ENCODE measurements at regions of chr10 and their contacts with region 1.

Region 1: GRCh38 chr10:29131952-29132820 is 156.7 kb upstream of the LYZL1 start:
- DNase-seq: no peak
- H3K4me3 ChIP-seq: no peak overlapping the region
- CTCF ChIP-seq: no peak

Region 2: DNA sequence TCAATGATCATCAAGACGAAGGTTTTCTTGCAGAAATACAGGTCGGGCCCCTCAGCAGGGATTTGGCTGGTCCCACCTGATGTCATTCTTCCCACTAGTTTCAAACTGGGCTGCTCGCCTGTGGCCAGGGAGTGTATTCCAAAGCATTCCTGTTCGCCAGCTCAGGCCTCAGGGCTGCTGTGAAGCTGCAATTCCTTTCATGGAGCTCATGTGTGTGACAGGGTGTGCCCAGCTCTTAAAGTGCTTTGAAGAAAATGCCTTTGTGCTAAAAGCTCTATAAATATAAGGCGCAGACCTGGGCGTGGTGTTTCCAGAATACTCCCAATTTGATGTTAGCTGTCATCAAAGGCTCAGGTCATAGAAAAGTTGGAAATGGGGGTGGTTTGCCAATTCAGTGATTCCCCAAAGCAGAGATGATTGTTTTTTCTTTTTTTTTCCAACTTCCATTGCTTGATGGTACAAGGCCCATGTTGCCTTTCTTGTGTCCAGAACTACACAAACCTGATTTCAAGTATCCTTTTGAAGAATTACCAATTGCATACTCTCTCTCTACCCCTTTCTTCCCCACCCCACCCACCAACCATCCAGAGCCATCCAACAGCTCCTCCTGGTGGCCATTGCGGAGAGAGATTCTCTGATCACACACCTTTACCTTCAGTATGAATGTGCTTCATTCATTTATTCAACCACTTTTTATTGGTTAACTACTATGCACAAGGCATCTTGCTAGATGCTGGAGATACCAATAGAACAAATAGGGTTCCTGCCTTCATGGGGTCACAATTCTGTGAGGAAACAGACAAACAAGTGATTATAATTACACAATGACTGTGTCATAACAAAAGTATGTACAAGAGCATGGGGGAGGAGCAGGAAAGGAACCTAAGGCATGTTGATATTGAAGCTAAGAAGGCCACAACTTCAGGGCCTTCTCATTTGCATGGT is 140.6 kb before region 1 on chr10:
- CTCF ChIA-PET with region 1: interaction called, 11 read pairs
- POLR2A ChIA-PET with region 1: no interaction called
- DNase-seq: no peak
- H3K4me3 ChIP-seq: no peak overlapping the region
- CTCF ChIP-seq: peak; percentile 48

Region 3: DNA sequence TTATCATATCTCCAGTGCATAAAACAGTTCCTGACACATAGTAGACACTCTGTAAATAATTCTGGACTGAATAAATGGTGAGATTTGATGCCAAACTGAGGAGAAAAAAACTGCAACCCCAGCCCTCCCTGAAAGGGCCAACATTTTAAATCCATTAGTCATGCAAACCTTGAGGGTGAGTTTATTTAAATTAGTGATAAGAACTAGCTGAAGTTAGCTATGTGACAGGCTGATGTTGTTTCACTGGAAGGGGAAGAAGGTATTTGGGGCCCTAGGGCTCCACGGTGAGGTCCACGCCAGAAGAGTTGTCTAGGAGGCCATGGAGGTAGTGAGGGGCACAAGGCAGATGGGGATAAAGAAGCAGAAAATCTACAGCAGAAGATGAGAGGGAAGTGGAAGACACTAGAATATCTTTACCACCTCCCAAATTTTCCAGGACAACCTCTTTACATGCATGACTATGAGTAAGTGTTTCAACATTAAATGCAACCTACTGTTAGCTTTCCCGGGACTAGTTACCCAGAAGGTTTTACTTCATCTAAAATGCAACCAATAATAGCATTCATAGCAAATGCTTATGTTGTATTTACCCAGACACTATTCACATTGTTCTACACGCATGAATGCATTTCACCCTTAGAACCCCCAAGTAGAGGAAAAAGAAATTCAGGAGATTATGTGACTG is 26.5 kb before region 1 on chr10:
- CTCF ChIA-PET with region 1: interaction called, 24 read pairs
- POLR2A ChIA-PET with region 1: no interaction called
- DNase-seq: no peak
- H3K4me3 ChIP-seq: no peak overlapping the region
- CTCF ChIP-seq: no peak

Region 4: DNA sequence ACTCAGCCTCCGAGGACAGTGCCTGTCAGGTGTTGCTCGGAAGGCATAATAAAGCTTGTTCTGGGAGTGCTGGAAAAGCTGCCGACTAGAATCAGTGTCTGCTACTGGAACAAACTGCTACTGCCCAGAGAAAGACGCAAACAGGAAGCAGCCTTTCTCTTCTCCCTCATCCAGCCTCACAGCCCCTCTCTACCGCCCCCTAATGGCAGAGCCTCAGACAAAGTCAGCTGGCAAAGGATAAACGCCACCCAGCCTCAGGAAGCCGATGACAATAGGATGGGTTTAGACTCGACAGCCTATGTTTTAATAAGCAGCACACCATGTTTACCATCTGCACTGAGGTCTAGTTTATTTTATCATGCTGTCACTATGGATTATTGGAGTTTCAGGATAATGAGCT is 12.8 kb before region 1 on chr10:
- CTCF ChIA-PET with region 1: interaction called, 33 read pairs
- POLR2A ChIA-PET with region 1: no interaction called
- DNase-seq: no peak
- H3K4me3 ChIP-seq: no peak overlapping the region
- CTCF ChIP-seq: peak; percentile 41

Measured in AG04449 (cell line).